ENCODE measurements at regions of chr7 and their contacts with region 1.

Region 1: GRCh38 chr7:106073701-106074100 is 38.4 kb downstream of the SYPL1 start:
- DNase-seq: no peak
- H3K4me3 ChIP-seq: no peak overlapping the region
- H3K27ac ChIP-seq: peak overlapping the region; percentile 14
- H3K4me1 ChIP-seq: peaks cover 48% of the 10 kb centered on the region
- H3K27me3 ChIP-seq: no peaks in the 10 kb centered on the region
- CTCF ChIP-seq: no peak

Region 2: GRCh38 chr7:106112117-106112971 is 38.6 kb after region 1 on chr7 and contains the start of gene SYPL1:
- CTCF ChIA-PET with region 1: no interaction called
- POLR2A ChIA-PET with region 1: interaction called, 13 read pairs
- intact Hi-C with region 1: no loop called
- DNase-seq: peak; percentile 95
- H3K4me3 ChIP-seq: peak within 1 kb of the TSS; percentile 88
- H3K27ac ChIP-seq: peak within 1 kb of the TSS; percentile 94
- H3K4me1 ChIP-seq: peaks cover 20% of the 10 kb centered on the region
- H3K27me3 ChIP-seq: no peaks in the 10 kb centered on the region
- CTCF ChIP-seq: 0 out of 2 replicates have a peak, but pooled peaks have one; percentile 17
- total RNA-seq, gene SYPL1: 64.4 and 76.4 TPM in 2 replicates

Region 3: DNA sequence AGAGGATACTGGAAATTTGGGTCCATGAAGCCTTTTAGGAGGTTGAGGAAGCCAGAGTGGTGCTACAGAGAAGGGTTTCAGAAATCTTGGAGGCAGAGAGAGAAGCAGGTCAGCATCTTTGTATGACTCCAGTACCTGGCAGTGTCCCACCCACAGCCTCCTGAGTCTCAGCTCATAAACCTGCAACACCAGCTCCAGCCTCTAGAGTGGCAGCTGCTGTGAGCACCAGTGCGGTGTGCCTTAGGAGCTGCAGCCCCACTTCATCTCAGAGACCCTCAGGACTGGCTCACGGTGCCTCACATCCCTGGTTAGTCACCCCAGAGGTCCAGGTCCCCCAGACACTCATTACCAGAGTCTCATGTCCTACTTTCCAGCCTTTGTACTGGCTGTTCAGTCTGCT is 886.1 kb after region 1 on chr7:
- CTCF ChIA-PET with region 1: no interaction called
- POLR2A ChIA-PET with region 1: no interaction called
- intact Hi-C with region 1: no loop called
- DNase-seq: no peak
- H3K4me3 ChIP-seq: no peak overlapping the region
- H3K27ac ChIP-seq: no peak overlapping the region
- H3K4me1 ChIP-seq: no peaks in the 10 kb centered on the region
- H3K27me3 ChIP-seq: no peaks in the 10 kb centered on the region
- CTCF ChIP-seq: peak; percentile 41

Measured in A673 (cell line).